GM12878 (cell line): ENCODE measurements at regions of chr13 and their contacts with region 1.

Region 1: GRCh38 chr13:53782488-53782961 is 753.9 kb downstream of the OLFM4 start:
- DNase-seq: peak; percentile 3
- ATAC-seq: peak; percentile 60
- H3K4me3 ChIP-seq: no peak overlapping the region
- H3K27ac ChIP-seq: no peak overlapping the region
- H3K4me1 ChIP-seq: no peaks in the 10 kb centered on the region
- H3K27me3 ChIP-seq: no peaks in the 10 kb centered on the region
- CTCF ChIP-seq: peak; percentile 65 to 75 (median 72)
- EP300 ChIP-seq: no peak
- POLR2A ChIP-seq: no peak
- RAD21 ChIP-seq: peak; percentile 91

Region 2: DNA sequence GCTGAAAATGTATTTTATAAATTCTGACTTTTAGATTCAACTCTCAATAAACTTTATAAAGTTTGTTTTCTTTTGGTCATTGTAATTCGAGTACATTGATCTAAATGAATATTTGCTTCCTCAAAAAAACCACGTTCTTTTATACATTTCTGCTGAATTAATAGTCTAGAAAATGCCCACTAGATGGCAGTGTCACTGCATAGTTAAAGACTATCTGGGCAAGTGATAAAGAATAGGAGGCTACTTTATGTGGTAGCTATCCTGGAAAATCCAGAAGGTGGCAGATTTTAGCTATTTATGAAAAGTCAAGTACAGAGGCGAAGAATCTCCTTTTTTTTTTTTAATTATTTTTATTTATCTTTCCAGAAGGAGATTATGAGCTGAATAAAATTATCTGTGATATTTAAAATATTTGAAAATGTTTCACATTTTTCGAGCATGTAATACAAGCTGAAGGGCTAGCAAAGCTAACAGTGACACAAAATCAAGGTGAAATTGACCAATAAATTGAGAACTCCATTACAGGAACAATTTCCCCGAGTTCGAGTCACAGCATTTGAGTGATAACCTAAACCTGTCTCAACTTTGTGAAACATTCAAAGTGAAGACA is 532.2 kb before region 1 on chr13:
- CTCF ChIA-PET with region 1: interaction called, 30 read pairs
- POLR2A ChIA-PET with region 1: no interaction called
- RAD21 ChIA-PET with region 1: interaction called, 12 read pairs
- SMC1A ChIA-PET with region 1: interaction called, 30 read pairs
- in situ Hi-C with region 1: no loop called
- intact Hi-C with region 1: loop called (anchors 5 kb)
- DNase-seq: peak; percentile 15
- ATAC-seq: peak; percentile 91
- H3K4me3 ChIP-seq: no peak overlapping the region
- H3K27ac ChIP-seq: no peak overlapping the region
- H3K4me1 ChIP-seq: no peaks in the 10 kb centered on the region
- H3K27me3 ChIP-seq: no peaks in the 10 kb centered on the region
- CTCF ChIP-seq: peak; percentile 57 to 66 (median 63)
- EP300 ChIP-seq: no peak
- POLR2A ChIP-seq: no peak
- RAD21 ChIP-seq: peak; percentile 88

Region 3: GRCh38 chr13:54144809-54145208 is 362.3 kb after region 1 on chr13:
- CTCF ChIA-PET with region 1: no interaction called
- POLR2A ChIA-PET with region 1: no interaction called
- RAD21 ChIA-PET with region 1: no interaction called
- SMC1A ChIA-PET with region 1: no interaction called
- in situ Hi-C with region 1: no loop called
- intact Hi-C with region 1: loop called (anchors 10 kb)
- DNase-seq: no peak
- ATAC-seq: no peak
- H3K4me3 ChIP-seq: no peak overlapping the region
- H3K27ac ChIP-seq: no peak overlapping the region
- H3K4me1 ChIP-seq: no peaks in the 10 kb centered on the region
- H3K27me3 ChIP-seq: no peaks in the 10 kb centered on the region
- CTCF ChIP-seq: no peak
- EP300 ChIP-seq: no peak
- POLR2A ChIP-seq: no peak
- RAD21 ChIP-seq: no peak

Region 4: GRCh38 chr13:54305377-54305776 is 522.9 kb after region 1 on chr13:
- CTCF ChIA-PET with region 1: interaction called, 13 read pairs
- POLR2A ChIA-PET with region 1: no interaction called
- RAD21 ChIA-PET with region 1: interaction called, 4 read pairs
- SMC1A ChIA-PET with region 1: interaction called, 5 read pairs
- in situ Hi-C with region 1: no loop called
- intact Hi-C with region 1: loop called (anchors 1 kb)
- DNase-seq: no peak
- ATAC-seq: no peak
- H3K4me3 ChIP-seq: no peak overlapping the region
- H3K27ac ChIP-seq: no peak overlapping the region
- H3K4me1 ChIP-seq: no peaks in the 10 kb centered on the region
- H3K27me3 ChIP-seq: no peaks in the 10 kb centered on the region
- CTCF ChIP-seq: no peak
- EP300 ChIP-seq: no peak
- POLR2A ChIP-seq: no peak
- RAD21 ChIP-seq: no peak

Region 5: DNA sequence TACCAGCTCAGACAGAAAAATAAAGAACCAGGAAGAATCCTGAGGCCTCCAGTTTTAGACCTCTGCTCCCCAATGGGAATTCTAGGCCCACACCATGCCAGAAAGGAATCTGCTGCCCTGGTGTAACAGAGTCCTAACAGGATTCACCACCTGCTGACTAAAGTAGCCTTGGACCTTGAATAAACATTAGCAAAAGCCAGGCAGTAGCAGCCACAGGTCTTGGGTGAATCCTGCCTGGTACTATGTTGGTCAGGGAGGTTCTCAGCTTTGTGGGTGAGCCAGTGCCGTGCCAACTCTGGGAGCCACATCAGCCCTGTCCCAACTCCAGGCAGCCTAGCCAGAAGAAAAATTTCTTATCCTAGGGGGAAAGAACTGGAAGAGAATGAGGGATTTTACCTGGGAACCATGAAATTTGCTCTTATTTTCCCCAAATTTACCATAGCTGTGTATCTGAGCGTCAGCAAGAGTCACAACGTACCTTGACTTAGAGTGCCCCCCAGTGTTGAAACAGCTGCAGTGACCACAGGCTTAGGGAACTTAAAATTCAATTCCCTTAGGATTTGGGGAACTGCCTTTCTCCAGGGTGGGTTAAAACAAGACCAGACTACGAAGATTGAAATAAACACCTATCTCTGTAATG is 1462.6 kb after region 1 on chr13:
- CTCF ChIA-PET with region 1: interaction called, 9 read pairs
- POLR2A ChIA-PET with region 1: no interaction called
- RAD21 ChIA-PET with region 1: interaction called, 5 read pairs
- SMC1A ChIA-PET with region 1: no interaction called
- in situ Hi-C with region 1: no loop called
- intact Hi-C with region 1: loop called (anchors 1 kb)
- DNase-seq: no peak
- ATAC-seq: no peak
- H3K4me3 ChIP-seq: no peak overlapping the region
- H3K27ac ChIP-seq: no peak overlapping the region
- H3K4me1 ChIP-seq: no peaks in the 10 kb centered on the region
- H3K27me3 ChIP-seq: no peaks in the 10 kb centered on the region
- CTCF ChIP-seq: peak in 2 of 3 experiments; percentile 21; a peak in 2 of 6 replicates
- EP300 ChIP-seq: no peak
- POLR2A ChIP-seq: no peak
- RAD21 ChIP-seq: peak; percentile 44; the same call in 1 of the 2 replicates